Mammary epithelial cell (primary cell): ENCODE measurements at regions of chr4 and their contacts with region 1.

Region 1: GRCh38 chr4:156829201-156829873 is 142.3 kb downstream of the PDGFC start:
- DNase-seq: peak; percentile 12
- H3K4me3 ChIP-seq: peak overlapping the region in 1 of 3 experiments; percentile 20
- H3K27ac ChIP-seq: peak overlapping the region; percentile 68
- H3K4me1 ChIP-seq: peaks cover 29% of the 10 kb centered on the region
- H3K27me3 ChIP-seq: no peaks in the 10 kb centered on the region
- CTCF ChIP-seq: no peak

Region 2: DNA sequence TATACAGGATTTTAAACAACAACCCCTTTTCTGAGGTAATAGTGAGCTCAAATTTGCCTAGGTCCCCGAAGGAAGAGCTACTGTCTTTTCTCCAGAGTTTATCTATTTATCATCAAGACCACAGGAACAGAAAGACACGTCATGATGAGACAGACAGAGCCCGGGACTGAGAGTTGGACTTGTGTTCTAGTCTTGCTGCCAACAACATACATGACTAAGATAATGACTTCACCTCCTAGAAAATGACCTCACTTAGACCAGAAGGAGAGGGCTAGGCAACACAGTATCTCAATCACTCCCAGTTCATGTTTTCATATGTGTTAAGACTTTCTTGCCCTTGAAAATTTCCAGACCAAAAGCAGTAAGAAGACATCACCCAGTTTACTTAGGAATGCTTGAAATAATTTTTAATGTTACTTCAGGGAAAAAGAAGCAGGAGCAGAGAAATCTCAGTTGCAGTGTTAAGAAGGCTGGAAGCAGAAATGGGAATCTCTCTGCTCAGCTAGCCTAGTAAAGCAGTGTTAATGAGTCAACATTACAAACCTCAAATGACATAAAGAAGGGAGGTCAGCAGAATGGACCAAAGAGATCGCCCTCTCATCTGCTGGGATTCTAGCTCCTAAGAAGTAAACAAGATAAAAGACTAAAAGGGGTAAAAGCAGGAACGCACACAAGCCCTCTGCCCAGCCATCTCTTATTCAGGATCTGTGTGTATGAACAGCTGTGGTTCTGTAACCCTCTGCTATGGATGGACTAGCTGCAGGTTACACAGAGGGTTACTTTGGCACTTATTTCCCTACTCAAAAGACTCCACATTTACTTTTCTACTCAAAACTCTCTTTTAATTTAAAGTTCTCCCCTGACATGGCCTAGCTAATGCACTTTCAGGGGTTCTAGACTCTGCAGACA is 117.4 kb after region 1 on chr4:
- CTCF ChIA-PET with region 1: no interaction called
- dilution Hi-C with region 1: no loop called
- in situ Hi-C with region 1: no loop called
- intact Hi-C with region 1: loop called (anchors 5 kb)
- DNase-seq: peak; percentile 98
- H3K4me3 ChIP-seq: peak overlapping the region in 1 of 3 experiments; percentile 19
- H3K27ac ChIP-seq: peak overlapping the region; percentile 98
- H3K4me1 ChIP-seq: peaks cover 49% of the 10 kb centered on the region
- H3K27me3 ChIP-seq: no peaks in the 10 kb centered on the region
- CTCF ChIP-seq: no peak